GM12878 (cell line): ENCODE measurements at regions of chr13 and their contacts with region 1.

Region 1: GRCh38 chr13:65505941-65506340 is 1724.2 kb downstream of the PCDH9 start:
- DNase-seq: no peak
- ATAC-seq: peak; percentile 84
- H3K4me3 ChIP-seq: no peak overlapping the region
- H3K27ac ChIP-seq: no peak overlapping the region
- H3K4me1 ChIP-seq: no peaks in the 10 kb centered on the region
- H3K27me3 ChIP-seq: no peaks in the 10 kb centered on the region
- CTCF ChIP-seq: no peak
- EP300 ChIP-seq: no peak
- POLR2A ChIP-seq: no peak
- RAD21 ChIP-seq: no peak

Region 2: DNA sequence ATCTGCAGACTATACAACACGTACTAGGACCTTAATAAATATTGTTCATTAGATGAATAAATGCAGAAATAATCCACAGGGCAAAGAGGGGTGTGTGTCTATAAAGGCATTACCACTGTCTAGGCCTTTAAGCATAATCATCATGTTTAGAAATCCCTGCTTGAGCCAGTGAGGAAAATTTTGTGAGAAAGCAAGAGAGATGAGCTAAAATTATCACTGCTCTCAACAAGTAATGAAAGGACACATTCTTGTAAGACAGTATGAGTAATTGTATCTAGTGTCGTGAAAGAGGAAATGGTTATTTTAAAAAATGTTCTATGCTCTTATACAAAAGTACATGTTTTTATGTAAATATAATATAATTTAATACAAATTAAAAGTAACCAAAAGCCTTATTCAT is 24.7 kb after region 1 on chr13:
- CTCF ChIA-PET with region 1: interaction called, 3 read pairs
- POLR2A ChIA-PET with region 1: no interaction called
- RAD21 ChIA-PET with region 1: interaction called, 12 read pairs
- SMC1A ChIA-PET with region 1: interaction called, 3 read pairs
- in situ Hi-C with region 1: no loop called
- intact Hi-C with region 1: no loop called
- DNase-seq: no peak
- ATAC-seq: peak; percentile 69
- H3K4me3 ChIP-seq: no peak overlapping the region
- H3K27ac ChIP-seq: no peak overlapping the region
- H3K4me1 ChIP-seq: no peaks in the 10 kb centered on the region
- H3K27me3 ChIP-seq: no peaks in the 10 kb centered on the region
- CTCF ChIP-seq: no peak
- EP300 ChIP-seq: no peak
- POLR2A ChIP-seq: no peak
- RAD21 ChIP-seq: no peak

Region 3: DNA sequence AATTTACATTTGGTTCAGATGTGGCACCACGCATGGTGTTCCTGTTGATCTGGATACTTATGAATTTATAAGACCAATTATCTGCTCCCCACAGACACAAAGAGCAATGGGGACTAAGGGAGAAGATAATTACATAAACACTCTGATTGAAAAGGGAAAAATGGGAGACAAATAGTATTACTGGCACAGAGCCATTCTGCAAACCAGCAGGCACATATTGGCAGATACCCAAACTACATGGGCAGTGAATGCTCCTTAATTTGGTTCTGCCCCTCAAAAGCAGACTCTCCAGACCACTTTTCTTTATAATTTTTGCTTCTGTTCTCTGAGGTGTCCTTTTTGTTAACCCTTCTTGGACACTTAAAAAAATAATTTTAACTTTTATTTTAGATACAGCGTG is 50.0 kb after region 1 on chr13:
- CTCF ChIA-PET with region 1: no interaction called
- POLR2A ChIA-PET with region 1: no interaction called
- RAD21 ChIA-PET with region 1: no interaction called
- SMC1A ChIA-PET with region 1: no interaction called
- in situ Hi-C with region 1: no loop called
- intact Hi-C with region 1: no loop called
- DNase-seq: no peak
- ATAC-seq: no peak
- H3K4me3 ChIP-seq: no peak overlapping the region
- H3K27ac ChIP-seq: no peak overlapping the region
- H3K4me1 ChIP-seq: no peaks in the 10 kb centered on the region
- H3K27me3 ChIP-seq: no peaks in the 10 kb centered on the region
- CTCF ChIP-seq: no peak
- EP300 ChIP-seq: no peak
- POLR2A ChIP-seq: no peak
- RAD21 ChIP-seq: no peak

Region 4: GRCh38 chr13:65844266-65844841 is 338.4 kb after region 1 on chr13:
- CTCF ChIA-PET with region 1: no interaction called
- POLR2A ChIA-PET with region 1: no interaction called
- RAD21 ChIA-PET with region 1: no interaction called
- SMC1A ChIA-PET with region 1: no interaction called
- in situ Hi-C with region 1: no loop called
- intact Hi-C with region 1: no loop called
- DNase-seq: no peak
- ATAC-seq: no peak
- H3K4me3 ChIP-seq: no peak overlapping the region
- H3K27ac ChIP-seq: no peak overlapping the region
- H3K4me1 ChIP-seq: no peaks in the 10 kb centered on the region
- H3K27me3 ChIP-seq: no peaks in the 10 kb centered on the region; a peak in 1 of 4 replicates
- CTCF ChIP-seq: no peak
- EP300 ChIP-seq: no peak
- POLR2A ChIP-seq: no peak
- RAD21 ChIP-seq: no peak